H1 (cell line): ENCODE measurements at regions of chr19 and their contacts with region 1.

Region 1: DNA sequence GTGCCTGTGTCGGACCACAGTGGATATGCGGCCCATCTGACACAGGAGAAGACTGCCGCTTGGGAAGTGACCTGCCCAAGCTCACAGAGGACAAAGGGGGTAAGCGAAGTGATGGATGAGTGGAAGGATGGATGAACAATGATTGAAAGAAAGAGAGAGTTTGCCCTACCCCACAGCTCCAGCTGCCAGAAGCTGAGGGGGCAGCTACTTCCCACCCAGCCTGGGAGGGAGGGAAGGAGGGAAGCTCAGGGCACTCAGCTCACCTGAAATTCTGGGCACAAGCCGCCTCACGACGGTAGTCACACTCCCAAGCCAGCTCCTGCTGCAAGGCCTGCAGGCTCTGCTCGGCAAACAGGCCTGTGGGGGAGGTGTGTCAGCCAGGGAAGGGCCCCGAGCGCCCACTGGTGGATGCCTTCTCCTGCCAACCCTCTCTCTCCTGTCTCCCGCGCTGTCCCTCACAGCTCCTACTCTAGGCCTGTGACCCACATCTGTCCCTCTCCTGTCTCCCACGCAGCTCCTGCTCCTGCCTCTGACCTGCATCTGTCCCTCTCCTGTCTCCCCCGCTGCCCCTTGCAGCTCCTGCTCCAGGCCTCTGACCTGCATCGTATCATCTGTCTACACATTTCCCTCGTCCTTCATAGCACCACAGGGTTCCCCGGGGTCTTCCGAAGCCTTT is 12.0 kb upstream of the NUMBL start:
- DNase-seq: peak in 1 of 2 experiments; percentile 84
- H3K4me3 ChIP-seq: no peak overlapping the region
- H3K27ac ChIP-seq: no peak overlapping the region; the same call in 1 of the 2 replicates
- H3K4me1 ChIP-seq: peaks cover 0 to 4% (median 1%) of the 10 kb centered on the region in 4 experiments; a peak in 5 of 7 replicates
- H3K27me3 ChIP-seq: no peaks in the 10 kb centered on the region
- CTCF ChIP-seq: peak; percentile 74 to 83 (median 75)
- EP300 ChIP-seq: no peak
- POLR2A ChIP-seq: no peak
- RAD21 ChIP-seq: peak; percentile 60 to 66

Region 2: DNA sequence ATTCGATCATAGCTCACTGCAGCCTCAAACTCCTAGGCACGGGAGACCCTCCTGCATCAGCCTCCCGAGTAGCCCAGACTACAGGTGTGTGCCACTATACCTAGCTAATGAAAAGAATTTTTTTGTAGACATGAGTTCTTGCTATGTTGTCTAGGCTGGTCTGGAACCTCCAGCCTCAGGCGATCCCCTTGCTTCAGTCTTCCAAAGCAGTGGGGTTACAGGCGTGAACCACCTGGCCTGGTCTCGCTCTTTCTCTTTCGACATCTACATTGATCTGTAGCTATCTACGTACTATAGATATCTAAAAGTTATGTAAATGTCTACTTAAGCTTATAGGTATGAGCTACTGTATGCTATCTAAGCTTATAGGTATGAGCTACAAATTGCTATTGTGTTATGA is 44.4 kb before region 1 on chr19:
- CTCF ChIA-PET with region 1: interaction called, 23 read pairs
- POLR2A ChIA-PET with region 1: interaction called, 4 read pairs
- DNase-seq: no peak
- H3K4me3 ChIP-seq: no peak overlapping the region
- H3K27ac ChIP-seq: no peak overlapping the region
- H3K4me1 ChIP-seq: no peaks in the 10 kb centered on the region; a peak in 1 of 7 replicates
- H3K27me3 ChIP-seq: no peaks in the 10 kb centered on the region
- CTCF ChIP-seq: no peak
- EP300 ChIP-seq: no peak
- POLR2A ChIP-seq: no peak
- RAD21 ChIP-seq: no peak

Region 3: GRCh38 chr19:40662921-40663694 is 39.4 kb before region 1 on chr19:
- CTCF ChIA-PET with region 1: interaction called, 23 read pairs
- POLR2A ChIA-PET with region 1: interaction called, 7 read pairs
- DNase-seq: peak; percentile 70 to 98
- H3K4me3 ChIP-seq: peak overlapping the region; percentile 35 to 74 (median 60)
- H3K27ac ChIP-seq: no peak overlapping the region; the same call in 1 of the 2 replicates
- H3K4me1 ChIP-seq: peaks cover 0 to 4% (median 3%) of the 10 kb centered on the region in 4 experiments; a peak in 5 of 7 replicates
- H3K27me3 ChIP-seq: no peaks in the 10 kb centered on the region
- CTCF ChIP-seq: peak; percentile 82 to 95 (median 93)
- EP300 ChIP-seq: no peak
- POLR2A ChIP-seq: no peak; a peak in 1 of 3 replicates
- RAD21 ChIP-seq: peak; percentile 92 to 97